ENCODE measurements at regions of chr19 and their contacts with region 1.

Region 1: DNA sequence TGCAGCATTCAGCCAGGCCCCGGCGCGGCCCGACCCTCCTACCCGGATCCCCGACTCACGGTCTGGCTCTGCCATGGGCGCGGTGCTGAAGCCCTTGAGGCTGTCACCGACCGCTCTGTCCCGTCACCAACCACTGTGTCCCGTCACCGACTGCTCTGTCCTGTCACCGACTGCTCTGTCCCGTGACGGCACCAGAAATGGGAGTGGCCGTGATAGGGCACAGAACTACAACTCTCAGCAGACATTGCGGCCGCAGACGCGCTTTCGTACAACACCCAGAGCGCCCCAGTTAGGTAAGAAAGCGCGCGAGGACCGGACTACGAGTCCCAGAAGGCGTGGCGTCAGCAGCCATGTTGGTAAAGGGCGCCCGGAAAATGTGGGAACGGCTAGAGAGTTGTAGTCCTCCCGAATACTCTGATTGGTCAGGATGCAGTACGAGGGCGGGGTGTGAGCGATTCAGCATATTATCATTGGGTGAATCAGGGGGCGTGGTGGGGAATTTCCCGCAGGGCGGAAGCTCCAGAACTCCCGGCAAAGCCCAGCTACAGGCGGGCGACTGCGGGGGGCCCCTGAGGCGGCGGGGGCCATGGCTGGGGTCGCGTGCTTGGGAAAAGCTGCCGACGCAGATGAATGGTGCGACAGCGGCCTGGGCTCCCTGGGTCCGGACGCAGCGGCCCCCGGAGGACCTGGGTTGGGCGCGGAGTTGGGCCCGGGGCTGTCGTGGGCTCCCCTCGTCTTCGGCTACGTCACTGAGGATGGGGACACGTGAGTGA is at the starts of genes NFKBIB and SIRT2:
- DNase-seq: peak; percentile 100
- H3K4me3 ChIP-seq: peak within 1 kb of the TSS; percentile 63 to 88
- H3K27ac ChIP-seq: peak within 1 kb of the TSS; percentile 82 to 92
- H3K4me1 ChIP-seq: peaks cover 0 to 38% (median 23%) of the 10 kb centered on the region in 4 donors
- H3K27me3 ChIP-seq: no peaks in the 10 kb centered on the region
- CTCF ChIP-seq: no peak

Region 2: GRCh38 chr19:38618590-38619360 is 280.9 kb before region 1 on chr19 and contains the start of gene EIF3K:
- intact Hi-C with region 1: loop called (anchors 10 kb)
- DNase-seq: peak; percentile 99 to 100
- H3K4me3 ChIP-seq: peak within 1 kb of the TSS; percentile 90 to 98
- H3K27ac ChIP-seq: peak within 1 kb of the TSS; percentile 80 to 83
- H3K4me1 ChIP-seq: peaks cover 0 to 25% (median 19%) of the 10 kb centered on the region in 4 donors
- H3K27me3 ChIP-seq: no peaks in the 10 kb centered on the region
- CTCF ChIP-seq: no peak

Region 3: DNA sequence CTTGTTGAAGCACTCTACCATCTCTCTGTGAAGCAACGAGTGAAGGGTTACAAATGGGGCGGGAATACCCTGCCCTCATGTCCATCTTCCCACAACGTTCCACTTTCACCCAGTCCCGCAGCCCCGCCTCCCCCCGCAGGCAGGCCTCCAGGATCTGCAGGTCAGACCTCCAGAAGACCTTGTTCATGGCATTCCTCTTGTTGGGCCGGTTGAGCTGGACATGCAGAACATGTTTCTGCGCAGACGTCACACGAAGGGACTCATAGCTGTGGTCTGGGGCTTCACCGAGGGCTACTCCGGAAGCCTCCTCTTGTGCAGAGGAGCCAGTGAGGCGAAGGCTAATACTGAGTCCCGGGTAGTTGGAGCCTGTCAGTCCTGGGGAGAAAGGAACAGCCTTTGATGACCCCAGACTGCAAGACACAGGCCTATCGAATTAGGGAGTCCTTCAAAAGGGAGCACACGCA is 68.5 kb before region 1 on chr19:
- intact Hi-C with region 1: loop called (anchors 2 kb)
- DNase-seq: peak; percentile 46 to 79
- H3K4me3 ChIP-seq: peak overlapping the region; percentile 65 to 84
- H3K27ac ChIP-seq: peak overlapping the region; percentile 85 to 87
- H3K4me1 ChIP-seq: peaks cover 0 to 40% (median 24%) of the 10 kb centered on the region in 4 donors
- H3K27me3 ChIP-seq: no peaks in the 10 kb centered on the region
- CTCF ChIP-seq: no peak

Region 4: DNA sequence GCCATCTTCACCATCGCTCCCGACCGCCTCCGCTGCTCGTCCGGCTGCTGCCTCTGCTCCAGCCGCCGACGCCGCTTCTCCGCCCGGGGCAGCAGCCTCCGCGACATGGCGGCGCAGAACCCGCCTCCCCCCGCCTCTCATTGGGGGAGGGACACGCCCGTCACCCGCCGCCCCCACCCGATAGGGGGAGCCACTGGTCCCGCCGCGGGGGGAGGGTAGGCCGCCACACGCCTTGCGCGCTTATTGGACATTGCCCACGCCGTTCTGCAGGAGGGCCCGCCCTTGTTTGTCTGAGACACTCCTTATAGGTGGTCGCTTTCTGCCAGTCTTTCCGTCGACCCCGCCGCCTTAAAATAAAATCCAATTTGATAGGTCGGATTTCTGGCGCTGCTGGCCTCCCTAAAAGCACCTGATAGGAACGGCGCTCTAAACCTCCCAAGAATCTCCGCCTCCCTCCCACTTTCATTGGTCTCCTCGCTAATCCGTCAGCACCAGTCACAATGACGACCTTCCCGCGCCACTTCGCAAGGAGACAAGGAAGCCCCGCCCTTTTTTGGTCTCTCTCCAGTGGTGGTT is 49.7 kb before region 1 on chr19 and contains the start of gene HNRNPL:
- intact Hi-C with region 1: loop called (anchors 2 kb)
- DNase-seq: peak in 1 of 2 donors; percentile 100
- H3K4me3 ChIP-seq: peak within 1 kb of the TSS; percentile 92 to 95
- H3K27ac ChIP-seq: peak within 1 kb of the TSS; percentile 98 to 100
- H3K4me1 ChIP-seq: peaks cover 0 to 52% (median 39%) of the 10 kb centered on the region in 4 donors
- H3K27me3 ChIP-seq: no peaks in the 10 kb centered on the region
- CTCF ChIP-seq: peak; percentile 37 to 43

Region 5: DNA sequence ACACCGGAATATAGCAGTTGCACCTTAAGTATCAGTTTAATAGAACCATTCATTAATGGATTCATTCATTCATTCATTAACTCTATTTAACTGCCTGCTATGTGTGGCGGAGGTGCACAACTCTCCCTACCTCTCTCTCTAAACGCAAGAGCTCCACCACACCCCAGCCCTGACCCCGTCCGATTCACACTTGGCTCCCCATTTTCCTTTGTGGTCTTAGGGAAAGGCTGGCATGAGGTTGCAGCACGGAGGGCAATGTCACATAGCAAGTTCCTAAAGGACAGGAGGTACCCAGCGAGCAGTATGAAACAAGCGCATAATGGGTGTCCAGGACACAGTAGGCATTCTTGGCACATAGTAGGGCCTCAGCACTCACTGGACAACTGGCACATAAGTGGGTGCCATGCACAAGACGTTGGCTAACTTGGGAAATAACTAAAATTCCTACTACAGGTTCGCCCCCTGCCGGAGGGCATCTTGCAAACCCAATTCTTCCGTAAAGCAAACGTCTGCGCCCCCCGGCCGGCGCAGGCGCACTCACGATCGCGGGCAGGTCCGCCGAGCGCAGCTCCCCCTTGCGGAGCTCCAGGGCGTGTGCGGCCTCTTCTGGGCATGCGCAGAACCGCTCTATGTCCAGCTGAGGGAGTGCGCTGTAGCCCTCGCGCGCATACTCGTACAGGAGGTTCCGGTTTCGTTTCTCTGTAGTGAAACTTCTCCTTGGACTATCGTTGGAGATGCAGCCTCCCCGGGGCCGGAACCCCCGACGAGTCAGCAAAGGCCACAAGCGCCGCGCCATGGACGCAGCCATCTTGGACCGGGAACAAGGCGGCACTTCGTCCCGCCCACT is 30.5 kb after region 1 on chr19 and contains the start of gene SARS2:
- intact Hi-C with region 1: no loop called
- DNase-seq: peak; percentile 91 to 95
- H3K4me3 ChIP-seq: peak within 1 kb of the TSS; percentile 64 to 84
- H3K27ac ChIP-seq: peak within 1 kb of the TSS; percentile 74 to 83
- H3K4me1 ChIP-seq: peaks cover 0 to 21% (median 19%) of the 10 kb centered on the region in 4 donors
- H3K27me3 ChIP-seq: no peaks in the 10 kb centered on the region
- CTCF ChIP-seq: peak; percentile 98 to 100

Measured in tibial artery (tissue), 4 donors.